ENCODE measurements at regions of chr6 and their contacts with region 1.

Region 1: GRCh38 chr6:104789770-104790190 is 69.9 kb downstream of the HACE1 start:
- DNase-seq: no peak
- ATAC-seq: no peak
- H3K4me3 Mint-ChIP-seq: no peak overlapping the region
- H3K27ac Mint-ChIP-seq: no peak overlapping the region; the same call in 1 of the 2 replicates
- H3K4me1 Mint-ChIP-seq: no peaks in the 10 kb centered on the region
- H3K27me3 Mint-ChIP-seq: no peaks in the 10 kb centered on the region
- CTCF ChIP-seq: no peak

Region 2: DNA sequence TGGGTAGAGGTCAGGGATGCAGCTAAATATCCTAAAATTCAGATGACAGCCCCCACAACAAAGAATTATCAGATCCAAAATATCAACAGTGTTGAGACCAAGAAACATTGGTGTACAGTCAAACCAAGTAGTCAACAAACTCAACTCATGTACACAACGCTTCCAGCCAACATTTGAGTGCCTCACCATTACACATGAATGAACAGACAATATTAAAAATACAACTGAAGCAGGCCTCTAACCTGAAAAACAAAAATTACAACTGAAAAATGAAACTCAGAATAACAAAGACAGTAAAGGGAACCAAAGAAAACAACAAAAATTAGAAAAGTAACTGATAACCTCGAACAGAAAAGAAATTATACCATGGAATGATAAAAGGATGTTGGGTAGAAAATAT is 23.8 kb after region 1 on chr6:
- CTCF ChIA-PET with region 1: interaction called, 11 read pairs
- POLR2A ChIA-PET with region 1: no interaction called
- DNase-seq: no peak
- ATAC-seq: no peak
- H3K4me3 Mint-ChIP-seq: no peak overlapping the region
- H3K27ac Mint-ChIP-seq: no peak overlapping the region
- H3K4me1 Mint-ChIP-seq: peaks cover 32% of the 10 kb centered on the region
- H3K27me3 Mint-ChIP-seq: no peaks in the 10 kb centered on the region
- CTCF ChIP-seq: no peak

Measured in WTC11 (cell line).